ENCODE measurements at regions of chr2 and their contacts with region 1.

Region 1: DNA sequence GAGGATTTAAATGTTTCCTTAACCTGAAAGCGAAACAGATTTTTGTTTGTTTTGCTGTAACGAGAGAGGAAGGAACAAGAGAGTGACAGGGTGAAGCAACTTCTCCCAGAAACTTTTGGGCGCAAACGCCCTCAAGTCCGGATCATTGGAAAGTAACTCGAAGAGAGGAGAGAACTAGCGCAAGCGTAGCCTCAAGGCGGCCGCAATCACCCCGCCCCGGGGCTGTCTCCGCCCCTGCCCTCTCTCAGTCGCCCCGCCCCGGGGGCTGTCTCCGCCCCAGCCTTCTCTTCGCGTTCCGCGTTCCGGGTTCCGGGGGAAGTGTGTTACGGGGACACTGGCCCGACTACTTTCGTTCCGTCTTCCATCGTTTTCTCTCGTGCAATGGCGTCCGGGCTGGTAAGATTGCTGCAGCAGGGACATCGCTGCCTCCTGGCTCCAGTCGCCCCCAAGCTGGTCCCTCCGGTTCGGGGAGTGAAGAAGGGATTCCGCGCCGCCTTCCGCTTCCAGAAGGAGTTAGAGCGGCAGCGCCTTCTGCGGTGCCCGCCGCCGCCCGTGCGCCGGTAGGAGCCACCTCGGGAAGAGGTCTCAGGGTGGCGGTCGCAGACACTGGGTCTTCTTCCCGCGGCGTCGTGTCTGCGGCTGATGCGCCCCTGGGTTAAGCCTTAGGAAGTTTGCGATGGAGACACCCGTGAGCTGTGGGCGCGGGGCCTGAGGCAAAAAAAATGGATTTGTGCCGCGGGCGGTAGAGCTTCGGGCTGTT is at the start of gene MRPL44:
- DNase-seq: peak; percentile 93
- CTCF ChIP-seq: no peak

Region 2: DNA sequence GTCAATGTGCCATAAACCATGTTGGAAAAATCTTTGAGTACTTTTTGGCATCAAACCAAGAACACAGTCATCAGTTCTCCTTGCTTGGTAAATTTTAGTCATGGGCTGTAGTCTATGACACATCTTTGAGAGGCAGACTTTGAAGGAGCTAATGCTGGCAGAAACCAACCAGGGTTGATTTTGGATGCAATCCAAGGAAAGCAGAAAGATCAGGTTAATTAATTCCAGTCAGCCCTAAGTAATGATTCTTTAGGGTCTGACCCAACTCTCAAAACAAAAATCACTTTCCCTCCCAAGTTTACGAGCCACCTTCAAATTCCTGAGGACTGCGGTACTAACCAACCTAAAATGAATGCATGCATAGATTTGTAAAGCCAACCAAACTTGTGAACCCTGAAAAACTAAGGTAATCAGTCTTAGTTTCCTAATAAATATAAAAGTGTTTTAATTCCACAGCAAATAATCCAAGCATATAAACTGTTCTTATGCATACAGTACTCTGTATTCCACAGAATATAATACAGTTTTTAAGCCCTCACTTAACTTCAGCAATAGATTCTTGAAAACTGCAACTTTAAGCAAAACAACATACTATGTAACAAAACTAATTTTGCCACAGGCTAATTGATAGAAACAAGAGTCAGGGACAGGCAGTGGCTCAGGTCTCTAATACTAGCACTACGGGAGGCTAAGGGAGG is 141.9 kb before region 1 on chr2:
- CTCF ChIA-PET with region 1: no interaction called
- POLR2A ChIA-PET with region 1: no interaction called
- DNase-seq: no peak
- CTCF ChIP-seq: no peak

Region 3: DNA sequence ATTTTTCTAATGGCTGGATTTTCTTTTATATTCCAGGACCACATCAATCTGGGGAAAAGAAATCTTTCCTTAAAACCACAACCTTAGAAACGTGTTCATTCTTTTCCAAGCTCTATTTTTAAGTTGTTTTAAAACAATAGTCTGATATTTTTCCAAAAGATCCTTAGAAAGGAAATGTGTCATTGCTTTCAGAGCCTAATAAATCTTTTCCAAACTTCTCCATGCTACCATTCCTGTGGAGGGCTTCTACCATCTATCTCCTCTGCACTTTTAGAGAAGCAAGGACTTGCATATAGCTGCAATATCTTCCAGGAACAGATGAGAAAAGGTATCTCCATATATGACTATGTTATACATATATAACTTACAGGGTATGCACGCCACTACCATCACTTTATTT is 33.3 kb before region 1 on chr2:
- CTCF ChIA-PET with region 1: no interaction called
- POLR2A ChIA-PET with region 1: no interaction called
- DNase-seq: no peak
- CTCF ChIP-seq: no peak

Region 4: DNA sequence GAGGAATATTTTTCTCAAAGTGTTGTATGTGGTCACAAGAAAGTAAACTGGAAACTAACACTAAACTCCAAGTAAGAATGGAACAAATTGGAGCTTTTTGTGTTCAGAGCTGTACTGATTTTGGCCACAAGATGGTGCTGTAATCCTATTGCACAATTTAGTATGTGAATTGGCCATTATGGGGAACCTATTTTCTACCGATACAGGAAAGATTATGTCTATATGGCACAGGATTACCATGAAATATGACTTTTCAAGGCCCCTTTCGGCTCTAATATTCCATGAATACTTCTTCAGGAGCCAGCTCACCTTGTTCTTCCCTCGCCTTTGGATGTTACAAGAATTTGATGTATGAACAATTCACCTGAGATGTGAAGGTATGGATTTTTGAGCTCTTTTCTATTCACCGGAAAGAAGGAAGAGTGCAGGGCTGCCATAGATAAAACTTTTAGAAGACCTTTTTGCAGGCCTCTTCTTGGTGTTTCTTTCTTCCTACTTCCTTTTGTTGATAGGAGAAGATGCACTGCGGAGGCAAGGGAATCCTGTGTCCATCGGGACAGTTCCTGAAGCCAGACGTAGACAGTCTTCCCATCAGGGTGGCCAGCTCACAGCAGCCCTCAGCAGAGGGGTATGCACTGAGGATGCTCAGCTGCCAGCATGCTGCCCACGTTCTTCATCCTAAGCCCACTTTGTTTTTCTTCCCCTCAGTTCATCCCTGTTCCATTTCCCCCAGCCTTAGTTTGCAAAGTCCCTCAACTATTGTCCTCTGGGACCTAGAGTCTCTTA is 13.3 kb after region 1 on chr2:
- CTCF ChIA-PET with region 1: interaction called, 71 read pairs
- POLR2A ChIA-PET with region 1: no interaction called
- DNase-seq: peak; percentile 39
- CTCF ChIP-seq: peak; percentile 75

Measured in GM10248 (cell line).